ENCODE measurements at regions of chr10 and their contacts with region 1.

Region 1: DNA sequence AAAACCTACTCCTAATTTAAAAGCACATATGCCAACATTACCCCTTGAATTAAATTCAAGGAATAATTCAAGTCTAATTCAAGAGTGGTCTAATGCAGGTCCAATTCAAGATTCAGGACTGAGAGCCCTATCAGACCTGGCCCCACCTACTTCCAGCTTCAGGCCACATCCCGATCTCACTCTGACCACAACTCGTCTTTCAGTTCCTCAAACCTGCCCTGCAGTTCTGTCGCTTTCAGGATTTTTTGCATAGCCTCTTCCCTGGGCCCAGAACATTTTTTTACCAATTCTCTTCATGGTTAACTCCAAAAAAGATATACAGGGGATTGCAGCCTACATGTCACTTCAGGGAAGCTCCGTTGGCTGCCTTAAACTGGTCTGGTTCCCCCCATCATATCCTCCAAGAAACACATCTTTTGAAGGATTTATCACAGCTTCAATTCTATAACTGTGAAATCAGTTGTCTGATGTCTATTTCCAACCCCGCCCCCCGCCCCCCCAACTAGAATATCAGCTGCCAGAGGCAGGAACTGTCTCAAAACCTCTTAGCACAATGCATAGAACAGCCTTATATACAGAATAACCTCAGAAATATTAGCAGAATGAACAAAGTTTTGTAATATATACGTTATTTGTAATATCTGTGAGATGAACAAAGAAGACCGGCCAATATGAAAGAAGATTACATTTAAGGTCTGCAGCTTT is 20.8 kb downstream of the CCDC6 start:
- DNase-seq: peak; percentile 28
- H3K4me3 Mint-ChIP-seq: no peak overlapping the region
- H3K27ac Mint-ChIP-seq: peak overlapping the region; percentile 65
- H3K4me1 Mint-ChIP-seq: peaks cover 85% of the 10 kb centered on the region
- H3K27me3 Mint-ChIP-seq: no peaks in the 10 kb centered on the region

Region 2: DNA sequence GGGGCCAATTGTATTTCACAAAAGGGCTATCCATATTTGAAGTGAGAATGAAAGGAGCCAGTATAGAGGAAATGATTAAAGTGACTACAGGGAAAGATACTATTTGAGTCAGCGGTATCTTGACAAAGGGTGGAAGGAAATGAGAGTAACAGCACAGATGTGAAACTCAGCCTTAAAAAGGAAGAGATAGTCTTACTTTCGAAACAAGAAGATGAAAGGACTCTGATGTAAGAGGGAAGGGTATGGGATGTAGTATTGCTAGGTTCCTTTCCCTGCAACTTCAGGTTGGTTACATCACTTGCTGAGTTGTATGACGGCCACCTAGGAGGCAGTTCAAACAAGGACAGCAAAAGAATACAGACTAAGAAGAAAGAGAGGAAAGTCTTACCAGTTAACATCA is 1603.0 kb before region 1 on chr10:
- CTCF ChIA-PET with region 1: no interaction called
- intact Hi-C with region 1: loop called (anchors 1 kb)
- DNase-seq: peak; percentile 68
- H3K4me3 Mint-ChIP-seq: peak overlapping the region; percentile 57
- H3K27ac Mint-ChIP-seq: peak overlapping the region; percentile 91
- H3K4me1 Mint-ChIP-seq: peaks cover 41% of the 10 kb centered on the region
- H3K27me3 Mint-ChIP-seq: no peaks in the 10 kb centered on the region

Region 3: GRCh38 chr10:58625070-58625469 is 1260.5 kb before region 1 on chr10:
- CTCF ChIA-PET with region 1: no interaction called
- intact Hi-C with region 1: no loop called
- DNase-seq: no peak
- H3K4me3 Mint-ChIP-seq: no peak overlapping the region
- H3K27ac Mint-ChIP-seq: no peak overlapping the region
- H3K4me1 Mint-ChIP-seq: no peaks in the 10 kb centered on the region
- H3K27me3 Mint-ChIP-seq: no peaks in the 10 kb centered on the region

Region 4: DNA sequence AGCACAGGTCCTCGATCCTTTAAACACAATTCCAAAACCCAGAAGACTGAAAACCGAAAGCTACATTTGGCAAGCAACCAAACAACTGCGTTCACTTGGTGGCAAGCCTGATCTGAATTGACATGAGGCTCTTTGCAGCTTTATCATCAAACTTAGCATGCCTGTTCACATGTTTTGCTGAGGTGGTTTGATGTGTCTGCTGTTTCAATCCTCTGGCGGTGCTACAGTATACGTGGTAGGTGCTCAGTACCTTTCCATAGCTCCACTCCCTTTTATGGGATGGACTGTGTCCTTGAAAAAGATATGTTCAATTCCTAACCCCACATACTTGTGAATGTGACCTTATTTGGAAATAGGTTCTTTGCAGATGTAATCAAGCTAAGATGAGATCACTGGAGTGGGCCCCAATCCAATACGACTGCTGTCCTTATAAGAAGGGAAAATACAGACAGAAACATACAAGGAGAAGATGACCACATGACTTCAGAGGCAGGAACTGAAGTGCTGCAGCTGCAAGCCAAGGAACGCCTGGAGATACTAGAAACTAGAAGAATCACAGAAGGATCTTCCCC is 12.6 kb before region 1 on chr10:
- CTCF ChIA-PET with region 1: interaction called, 3 read pairs
- intact Hi-C with region 1: loop called (anchors 1 kb)
- DNase-seq: peak; percentile 39
- H3K4me3 Mint-ChIP-seq: peak overlapping the region; percentile 11
- H3K27ac Mint-ChIP-seq: no peak overlapping the region
- H3K4me1 Mint-ChIP-seq: peaks cover 86% of the 10 kb centered on the region
- H3K27me3 Mint-ChIP-seq: no peaks in the 10 kb centered on the region

Region 5: DNA sequence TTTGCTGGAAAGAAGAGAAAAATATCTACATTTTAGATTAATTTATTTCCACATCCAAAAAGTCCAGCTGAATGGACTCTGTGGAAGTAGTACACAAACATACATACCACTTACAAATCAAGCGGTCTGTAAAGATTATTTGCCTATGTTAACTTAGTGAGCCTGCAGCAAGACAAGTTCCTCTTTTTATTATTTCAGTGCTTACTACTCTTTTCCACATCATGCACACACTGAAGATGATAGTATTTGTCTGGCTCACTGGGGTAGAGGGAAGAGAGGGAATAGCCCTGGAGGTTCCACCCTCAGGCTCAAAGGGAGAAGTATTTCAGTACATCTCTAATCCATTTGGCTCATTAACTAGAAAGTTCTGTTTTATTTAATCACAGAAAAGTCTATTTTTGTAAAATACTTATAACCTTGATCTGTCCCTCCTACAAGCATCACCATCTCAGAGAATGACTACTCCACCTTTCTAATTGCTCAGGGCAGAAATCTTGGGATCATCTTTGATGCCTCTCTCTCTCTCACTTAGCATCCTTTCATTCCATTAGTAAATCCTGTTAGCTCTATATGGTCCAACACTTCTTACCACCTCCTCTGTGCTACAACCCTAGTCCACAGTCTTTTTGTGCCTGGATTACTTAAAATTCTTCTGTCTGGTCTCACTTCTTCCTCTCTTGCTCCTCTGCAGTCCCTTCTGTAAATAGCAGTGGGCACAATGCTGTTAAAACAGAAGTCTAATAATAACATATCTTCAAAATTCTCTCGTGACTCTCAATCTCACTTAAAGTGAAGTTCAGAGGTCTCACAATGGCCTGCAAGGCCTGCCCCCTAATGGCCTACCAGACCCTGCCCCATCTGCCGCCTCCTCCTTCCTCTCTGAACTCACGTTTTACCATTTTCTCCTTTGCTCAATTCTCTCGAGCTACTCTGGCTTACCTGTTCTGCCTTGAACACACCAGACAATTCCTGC is 85.1 kb after region 1 on chr10:
- CTCF ChIA-PET with region 1: no interaction called
- intact Hi-C with region 1: no loop called
- DNase-seq: no peak
- H3K4me3 Mint-ChIP-seq: no peak overlapping the region
- H3K27ac Mint-ChIP-seq: no peak overlapping the region
- H3K4me1 Mint-ChIP-seq: no peaks in the 10 kb centered on the region
- H3K27me3 Mint-ChIP-seq: no peaks in the 10 kb centered on the region

Region 6: GRCh38 chr10:60000747-60001146 is 115.2 kb after region 1 on chr10:
- CTCF ChIA-PET with region 1: no interaction called
- intact Hi-C with region 1: loop called (anchors 1 kb)
- DNase-seq: peak; percentile 10
- H3K4me3 Mint-ChIP-seq: no peak overlapping the region
- H3K27ac Mint-ChIP-seq: peak overlapping the region; percentile 56
- H3K4me1 Mint-ChIP-seq: peaks cover 14% of the 10 kb centered on the region
- H3K27me3 Mint-ChIP-seq: no peaks in the 10 kb centered on the region

Region 7: DNA sequence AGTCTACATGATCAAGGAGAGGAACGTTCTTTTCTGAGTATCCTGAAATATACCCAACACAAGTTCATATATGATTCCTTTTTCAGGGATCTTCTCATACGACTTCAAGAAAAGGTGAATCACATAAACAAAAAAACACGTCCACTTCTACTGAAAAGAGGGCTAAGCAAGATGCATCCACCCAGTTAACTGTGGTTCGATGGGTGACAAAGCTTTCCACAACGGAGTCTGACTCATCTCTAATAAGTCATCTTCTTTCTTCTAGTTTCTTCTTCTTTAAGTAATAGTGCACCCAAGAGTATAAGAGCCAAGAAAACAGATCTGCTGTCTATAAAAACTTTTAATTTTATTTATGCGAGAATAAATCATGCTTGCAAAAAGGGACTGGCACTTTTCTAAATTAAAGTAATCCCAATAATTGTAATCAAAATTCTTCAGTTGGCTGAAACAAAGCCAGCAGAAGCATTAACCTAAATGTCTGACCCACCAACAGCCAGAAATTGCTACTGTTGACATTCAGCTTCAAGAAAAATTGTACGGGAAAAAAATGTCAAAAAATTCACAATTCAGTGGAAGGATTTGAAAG is 651.0 kb after region 1 on chr10:
- CTCF ChIA-PET with region 1: no interaction called
- intact Hi-C with region 1: loop called (anchors 2 kb)
- DNase-seq: peak; percentile 38
- H3K4me3 Mint-ChIP-seq: no peak overlapping the region
- H3K27ac Mint-ChIP-seq: no peak overlapping the region
- H3K4me1 Mint-ChIP-seq: peaks cover 34% of the 10 kb centered on the region
- H3K27me3 Mint-ChIP-seq: no peaks in the 10 kb centered on the region

Region 8: GRCh38 chr10:60717852-60718251 is 832.3 kb after region 1 on chr10:
- CTCF ChIA-PET with region 1: no interaction called
- intact Hi-C with region 1: loop called (anchors 5 kb)
- DNase-seq: no peak
- H3K4me3 Mint-ChIP-seq: no peak overlapping the region
- H3K27ac Mint-ChIP-seq: no peak overlapping the region
- H3K4me1 Mint-ChIP-seq: peaks cover 29% of the 10 kb centered on the region
- H3K27me3 Mint-ChIP-seq: no peaks in the 10 kb centered on the region